Thyroid gland (tissue), 4 donors: ENCODE measurements at regions of chr1 and their contacts with region 1.

Region 1: GRCh38 chr1:156591432-156592157 is at the start of gene NAXE:
- DNase-seq: peak; percentile 78 to 83
- H3K4me3 ChIP-seq: peak within 1 kb of the TSS; percentile 30 to 68 (median 44)
- H3K27ac ChIP-seq: peak within 1 kb of the TSS; percentile 64 to 83 (median 72)
- H3K4me1 ChIP-seq: peaks cover 11 to 12% of the 10 kb centered on the region in 2 donors
- H3K27me3 ChIP-seq: no peaks in the 10 kb centered on the region
- CTCF ChIP-seq: no peak
- POLR2A ChIP-seq: peak in 1 of 2 donors; percentile 84
- total RNA-seq, gene NAXE: 69.1 to 176 (median 117) TPM

Region 2: DNA sequence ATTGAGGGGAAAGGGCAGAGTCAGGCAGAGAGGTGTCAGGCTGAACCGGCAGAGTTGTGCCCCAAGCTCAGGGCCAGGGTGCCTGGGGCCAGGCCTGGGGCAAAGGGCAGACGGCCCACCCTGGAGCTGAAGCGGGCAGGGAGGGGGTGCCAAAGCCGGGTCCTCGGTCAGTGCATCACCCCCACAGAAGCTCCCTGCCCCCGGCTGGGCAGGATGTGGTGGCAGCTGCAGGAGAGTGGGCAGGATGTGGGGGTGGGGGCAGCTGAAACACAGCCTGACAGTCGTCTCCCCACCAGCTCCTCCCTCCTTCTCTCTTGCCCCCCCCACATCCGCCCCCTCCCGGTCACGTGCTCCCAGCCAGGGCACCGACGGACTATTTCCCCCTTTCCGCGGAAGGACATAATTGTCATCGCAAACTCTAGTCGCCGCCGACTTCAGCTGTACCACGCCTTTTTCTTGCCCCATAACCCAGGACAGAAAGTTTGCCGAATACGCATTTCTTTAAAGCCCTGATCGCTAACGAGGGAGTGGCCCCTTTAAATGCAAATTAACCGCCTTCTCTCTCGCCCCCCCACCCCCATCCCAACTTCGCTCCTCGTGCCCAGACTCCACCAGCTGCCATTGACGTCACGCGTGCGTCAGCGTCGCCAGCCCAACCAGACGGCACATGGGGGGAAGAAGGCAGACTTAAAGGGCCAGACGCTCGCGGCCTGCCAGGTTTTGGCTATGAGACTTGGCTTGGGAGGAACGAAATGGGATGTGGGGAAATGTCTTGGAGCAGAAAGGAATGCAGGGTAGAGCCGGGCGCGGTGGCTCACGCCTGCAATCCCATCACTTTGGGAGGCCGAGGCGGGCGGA is 86.5 kb before region 1 on chr1:
- intact Hi-C with region 1: loop called (anchors 5 kb)
- DNase-seq: peak; percentile 100
- H3K4me3 ChIP-seq: peak overlapping the region in 1 of 3 donors; percentile 8
- H3K27ac ChIP-seq: peak overlapping the region; percentile 99 to 100 (median 100)
- H3K4me1 ChIP-seq: peaks cover 54 to 66% of the 10 kb centered on the region in 2 donors
- H3K27me3 ChIP-seq: no peaks in the 10 kb centered on the region
- CTCF ChIP-seq: peak in 1 of 6 experiments; percentile 44
- POLR2A ChIP-seq: peak; percentile 43 to 80